SK-N-SH (cell line): ENCODE measurements at regions of chr7 and their contacts with region 1.

Region 1: GRCh38 chr7:123154231-123154860 is 45.4 kb downstream of the SLC13A1 start:
- DNase-seq: peak; percentile 49
- H3K4me3 ChIP-seq: no peak overlapping the region; a peak in 1 of 4 replicates
- H3K27ac ChIP-seq: no peak overlapping the region
- H3K4me1 ChIP-seq: no peaks in the 10 kb centered on the region; a peak in 1 of 4 replicates
- H3K27me3 ChIP-seq: no peaks in the 10 kb centered on the region
- CTCF ChIP-seq: peak; percentile 97
- EP300 ChIP-seq: no peak
- RAD21 ChIP-seq: peak; percentile 89

Region 2: DNA sequence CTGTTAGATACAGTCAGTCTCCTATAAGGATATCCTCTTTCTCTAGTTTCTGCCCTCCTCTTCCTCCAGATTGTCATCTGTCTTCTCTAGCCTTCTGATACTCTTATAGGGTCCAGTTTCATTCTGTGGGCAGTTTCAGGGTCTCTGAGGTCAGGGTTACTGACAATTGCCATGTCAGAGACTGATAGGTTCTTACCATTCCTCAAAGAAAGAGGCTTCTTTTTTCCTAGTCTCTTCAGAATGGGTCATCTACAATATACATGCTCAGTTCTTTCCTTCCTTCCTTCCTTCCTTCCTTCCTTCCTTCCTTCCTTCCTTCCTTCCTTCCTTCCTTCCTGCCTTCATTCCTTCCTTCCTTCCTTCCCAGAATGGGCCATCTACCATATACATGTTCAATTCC is 110.7 kb before region 1 on chr7:
- CTCF ChIA-PET with region 1: no interaction called
- POLR2A ChIA-PET with region 1: no interaction called
- DNase-seq: no peak
- H3K4me3 ChIP-seq: no peak overlapping the region
- H3K27ac ChIP-seq: no peak overlapping the region
- H3K4me1 ChIP-seq: 0 out of 4 replicates have a peak, but pooled peaks cover 0 to 3% of the 10 kb centered on the region in 2 experiments
- H3K27me3 ChIP-seq: no peaks in the 10 kb centered on the region
- CTCF ChIP-seq: no peak
- EP300 ChIP-seq: no peak
- RAD21 ChIP-seq: no peak

Region 3: GRCh38 chr7:123131140-123131539 is 23.2 kb before region 1 on chr7:
- CTCF ChIA-PET with region 1: interaction called, 14 read pairs
- POLR2A ChIA-PET with region 1: no interaction called
- DNase-seq: no peak
- H3K4me3 ChIP-seq: no peak overlapping the region
- H3K27ac ChIP-seq: no peak overlapping the region
- H3K4me1 ChIP-seq: no peaks in the 10 kb centered on the region
- H3K27me3 ChIP-seq: no peaks in the 10 kb centered on the region
- CTCF ChIP-seq: peak; percentile 51
- EP300 ChIP-seq: no peak
- RAD21 ChIP-seq: no peak

Region 4: GRCh38 chr7:123170333-123171246 is 16.2 kb after region 1 on chr7:
- CTCF ChIA-PET with region 1: interaction called, 47 read pairs
- POLR2A ChIA-PET with region 1: no interaction called
- DNase-seq: no peak
- H3K4me3 ChIP-seq: no peak overlapping the region
- H3K27ac ChIP-seq: no peak overlapping the region
- H3K4me1 ChIP-seq: no peaks in the 10 kb centered on the region
- H3K27me3 ChIP-seq: no peaks in the 10 kb centered on the region
- CTCF ChIP-seq: no peak
- EP300 ChIP-seq: no peak
- RAD21 ChIP-seq: no peak

Region 5: GRCh38 chr7:123270570-123270969 is 116.2 kb after region 1 on chr7:
- CTCF ChIA-PET with region 1: no interaction called
- POLR2A ChIA-PET with region 1: no interaction called
- DNase-seq: no peak
- H3K4me3 ChIP-seq: no peak overlapping the region
- H3K27ac ChIP-seq: no peak overlapping the region
- H3K4me1 ChIP-seq: no peaks in the 10 kb centered on the region; a peak in 1 of 4 replicates
- H3K27me3 ChIP-seq: no peaks in the 10 kb centered on the region
- CTCF ChIP-seq: no peak
- EP300 ChIP-seq: no peak
- RAD21 ChIP-seq: no peak

Region 6: GRCh38 chr7:123355576-123356195 is 201.3 kb after region 1 on chr7:
- CTCF ChIA-PET with region 1: interaction called, 20 read pairs
- POLR2A ChIA-PET with region 1: no interaction called
- DNase-seq: no peak
- H3K4me3 ChIP-seq: no peak overlapping the region
- H3K27ac ChIP-seq: no peak overlapping the region
- H3K4me1 ChIP-seq: peaks cover 0 to 24% of the 10 kb centered on the region in 2 experiments; a peak in 2 of 4 replicates
- H3K27me3 ChIP-seq: no peaks in the 10 kb centered on the region
- CTCF ChIP-seq: peak; percentile 11; the same call in 1 of the 2 replicates
- EP300 ChIP-seq: no peak
- RAD21 ChIP-seq: no peak